ENCODE measurements at regions of chr17 and their contacts with region 1.

Region 1: DNA sequence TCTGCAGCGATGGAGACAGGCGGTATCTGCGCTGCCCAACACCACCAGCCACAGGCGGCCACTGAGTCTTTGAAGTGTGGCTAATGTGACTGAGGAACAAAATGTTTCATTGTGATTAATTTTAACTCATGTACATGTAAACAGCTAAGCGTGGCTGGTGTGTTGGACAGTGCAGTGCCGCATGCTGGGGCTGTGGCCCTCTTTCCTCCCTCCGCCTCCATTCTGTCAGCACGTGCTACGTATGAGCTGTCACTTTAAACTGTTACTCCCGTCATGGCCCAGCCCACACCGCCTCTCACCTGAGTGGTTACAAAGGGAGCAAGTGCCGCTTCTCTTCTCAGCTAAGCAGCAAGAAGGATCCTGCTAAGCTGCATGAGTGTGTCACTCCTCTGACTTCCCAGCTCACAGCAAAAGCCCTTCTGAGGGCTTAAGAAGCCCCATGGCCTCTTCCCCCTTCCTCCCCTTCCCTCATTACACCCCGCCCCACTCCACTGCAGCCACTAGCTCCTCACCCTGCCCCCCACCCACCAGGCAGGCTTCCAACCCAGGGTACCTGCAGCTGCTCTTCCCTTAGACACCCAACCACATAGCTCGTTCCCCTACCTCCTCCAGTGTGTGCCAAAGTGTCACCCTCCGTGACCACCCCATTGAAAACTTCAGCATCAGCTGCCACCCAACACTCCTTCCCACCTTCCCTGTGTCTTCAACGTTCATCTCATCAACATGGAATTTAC is 15.0 kb downstream of the HASPIN start:
- DNase-seq: peak in 8 of 9 donors; percentile 56 to 69 (median 60)
- ATAC-seq: peak; percentile 79
- H3K4me3 ChIP-seq: no peak overlapping the region
- H3K4me3 Mint-ChIP-seq: peak overlapping the region; percentile 2 to 77 (median 68)
- H3K27ac ChIP-seq: no peak overlapping the region
- H3K27ac Mint-ChIP-seq: peak overlapping the region; percentile 61 to 95 (median 73)
- H3K4me1 ChIP-seq: peaks cover 11 to 20% of the 10 kb centered on the region in 2 donors
- H3K4me1 Mint-ChIP-seq: peaks cover 21 to 47% (median 38%) of the 10 kb centered on the region in 7 donors
- H3K27me3 ChIP-seq: no peaks in the 10 kb centered on the region
- H3K27me3 Mint-ChIP-seq: no peaks in the 10 kb centered on the region

Region 2: DNA sequence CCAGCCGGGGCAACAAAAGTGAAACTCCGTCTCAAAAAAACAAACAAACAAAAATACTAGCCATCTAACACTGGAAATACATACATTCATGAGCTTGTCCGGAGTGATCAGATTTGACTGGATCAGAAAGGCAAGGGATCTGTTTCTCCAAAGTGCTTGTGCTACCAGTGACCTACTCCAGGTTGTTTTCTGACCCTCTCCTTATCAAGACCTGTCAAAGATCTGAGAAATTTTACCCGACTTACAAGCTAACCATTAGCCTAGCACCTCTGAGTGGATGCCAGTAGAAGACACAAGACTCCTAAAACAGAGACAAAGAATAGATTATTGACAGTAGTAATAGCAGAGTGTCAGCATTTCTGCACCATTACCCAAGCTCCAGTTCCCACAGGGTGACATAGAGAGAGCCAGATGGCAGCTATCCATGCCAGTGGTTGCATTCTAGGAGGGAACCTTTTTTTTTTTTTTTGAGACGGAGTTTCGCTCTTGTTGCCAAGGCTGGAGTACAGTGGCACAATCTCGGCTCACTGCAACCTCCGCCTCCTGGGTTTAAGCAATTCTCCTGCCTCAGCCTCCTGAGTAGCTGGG is 253.2 kb before region 1 on chr17:
- CTCF ChIA-PET with region 1: no interaction called
- POLR2A ChIA-PET with region 1: no interaction called
- intact Hi-C with region 1: no loop called
- DNase-seq: no peak
- ATAC-seq: no peak
- H3K4me3 ChIP-seq: no peak overlapping the region
- H3K4me3 Mint-ChIP-seq: no peak overlapping the region
- H3K27ac ChIP-seq: no peak overlapping the region
- H3K27ac Mint-ChIP-seq: no peak overlapping the region
- H3K4me1 ChIP-seq: no peaks in the 10 kb centered on the region
- H3K4me1 Mint-ChIP-seq: no peaks in the 10 kb centered on the region
- H3K27me3 ChIP-seq: peaks cover 2 to 3% of the 10 kb centered on the region in 2 donors
- H3K27me3 Mint-ChIP-seq: peaks cover 16 to 44% (median 40%) of the 10 kb centered on the region in 5 donors

Region 3: DNA sequence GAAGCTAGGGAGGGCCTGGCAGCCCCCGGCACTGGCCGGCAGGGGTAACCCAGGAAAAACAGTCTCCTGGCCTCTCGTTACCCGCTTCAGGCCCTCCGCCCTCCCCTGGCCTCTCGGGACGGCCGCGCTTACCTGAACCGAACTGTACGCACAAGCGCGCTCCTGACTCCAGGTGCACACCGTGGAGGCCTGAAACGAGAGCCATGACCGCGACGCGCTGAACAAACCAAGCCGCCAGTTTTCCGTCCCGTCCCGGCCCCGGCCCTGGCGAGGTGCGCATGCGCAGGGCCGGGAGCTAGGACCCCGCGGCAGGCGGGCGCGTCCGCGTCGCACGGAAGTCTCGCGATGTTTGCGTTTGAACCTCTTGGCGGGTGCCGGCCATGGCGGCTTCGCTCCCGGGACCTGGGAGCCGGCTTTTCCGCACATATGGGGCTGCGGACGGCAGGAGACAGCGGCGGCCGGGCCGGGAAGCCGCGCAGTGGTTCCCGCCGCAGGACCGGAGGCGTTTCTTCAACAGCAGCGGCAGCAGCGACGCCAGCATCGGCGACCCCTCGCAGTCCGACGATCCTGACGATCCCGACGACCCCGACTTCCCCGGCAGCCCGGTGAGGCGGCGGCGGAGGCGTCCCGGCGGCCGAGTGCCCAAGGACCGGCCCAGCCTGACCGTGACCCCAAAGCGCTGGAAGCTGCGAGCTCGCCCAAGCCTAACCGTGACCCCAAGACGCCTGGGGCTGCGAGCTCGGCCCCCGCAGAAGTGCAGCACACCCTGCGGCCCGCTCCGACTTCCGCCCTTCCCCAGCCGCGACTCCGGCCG is 15.0 kb before region 1 on chr17 and contains the start of gene HASPIN:
- CTCF ChIA-PET with region 1: interaction called, 8 read pairs
- POLR2A ChIA-PET with region 1: interaction called, 3 read pairs
- intact Hi-C with region 1: loop called in 1 of 2 experiments (anchors 1 kb)
- DNase-seq: peak; percentile 85 to 97 (median 92)
- ATAC-seq: peak; percentile 92
- H3K4me3 ChIP-seq: peak within 1 kb of the TSS; percentile 77
- H3K4me3 Mint-ChIP-seq: peak within 1 kb of the TSS; percentile 84 to 95 (median 92)
- H3K27ac ChIP-seq: peak within 1 kb of the TSS; percentile 83
- H3K27ac Mint-ChIP-seq: peak within 1 kb of the TSS; percentile 65 to 94 (median 86)
- H3K4me1 ChIP-seq: peaks cover 7 to 24% of the 10 kb centered on the region in 2 donors
- H3K4me1 Mint-ChIP-seq: peaks cover 21 to 55% (median 39%) of the 10 kb centered on the region in 7 donors
- H3K27me3 ChIP-seq: no peaks in the 10 kb centered on the region
- H3K27me3 Mint-ChIP-seq: no peaks in the 10 kb centered on the region
- total RNA-seq, gene HASPIN: 0.32 to 18.5 (median 0.35) TPM

Region 4: GRCh38 chr17:3773511-3773910 is 34.8 kb after region 1 on chr17:
- CTCF ChIA-PET with region 1: interaction called, 7 read pairs
- POLR2A ChIA-PET with region 1: no interaction called
- intact Hi-C with region 1: loop called in 1 of 2 experiments (anchors 5 kb)
- DNase-seq: no peak
- ATAC-seq: no peak
- H3K4me3 ChIP-seq: no peak overlapping the region
- H3K4me3 Mint-ChIP-seq: no peak overlapping the region
- H3K27ac ChIP-seq: no peak overlapping the region
- H3K27ac Mint-ChIP-seq: no peak overlapping the region
- H3K4me1 ChIP-seq: peaks cover 8 to 36% of the 10 kb centered on the region in 2 donors
- H3K4me1 Mint-ChIP-seq: peaks cover 10 to 38% (median 25%) of the 10 kb centered on the region in 7 donors
- H3K27me3 ChIP-seq: no peaks in the 10 kb centered on the region
- H3K27me3 Mint-ChIP-seq: peaks cover 0 to 5% (median 0%) of the 10 kb centered on the region in 5 donors

Region 5: DNA sequence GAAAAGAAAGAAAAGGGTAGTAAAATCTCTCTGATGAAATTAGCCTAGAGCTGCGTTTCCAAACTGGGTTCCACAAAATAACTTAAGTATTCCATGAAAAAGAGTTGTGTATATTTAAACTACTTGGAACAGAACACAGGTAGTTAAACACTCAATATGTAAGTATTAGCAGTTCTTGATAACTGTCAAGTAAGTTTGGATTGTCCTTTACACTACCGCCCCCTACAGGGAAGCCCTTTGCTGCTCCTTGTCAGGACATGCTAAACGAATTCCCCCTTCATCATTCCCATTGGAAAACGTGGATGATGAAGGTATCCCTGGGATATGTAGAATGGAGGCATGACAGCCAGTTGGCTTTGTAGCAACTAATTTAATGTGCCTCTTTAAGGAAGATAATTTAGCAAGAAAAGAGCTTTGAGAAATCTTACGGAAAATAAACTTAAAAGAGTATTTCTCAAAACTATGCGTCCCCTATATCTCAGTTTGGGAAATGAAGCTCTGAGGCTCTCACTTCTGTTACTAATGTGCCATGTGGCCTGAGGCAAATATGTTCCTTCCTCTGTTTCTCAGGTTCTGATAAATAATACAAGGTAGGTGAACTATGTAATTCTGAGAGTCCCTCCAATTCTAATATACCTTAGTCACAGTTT is 88.5 kb after region 1 on chr17:
- CTCF ChIA-PET with region 1: interaction called, 154 read pairs
- POLR2A ChIA-PET with region 1: interaction called, 15 read pairs
- intact Hi-C with region 1: loop called (anchors 1 kb)
- DNase-seq: peak; percentile 22 to 75 (median 71)
- ATAC-seq: peak; percentile 74
- H3K4me3 ChIP-seq: no peak overlapping the region
- H3K4me3 Mint-ChIP-seq: no peak overlapping the region
- H3K27ac ChIP-seq: no peak overlapping the region
- H3K27ac Mint-ChIP-seq: peak overlapping the region in 2 of 9 donors; percentile 42 to 59
- H3K4me1 ChIP-seq: no peaks in the 10 kb centered on the region
- H3K4me1 Mint-ChIP-seq: peaks cover 0 to 15% (median 4%) of the 10 kb centered on the region in 7 donors
- H3K27me3 ChIP-seq: no peaks in the 10 kb centered on the region
- H3K27me3 Mint-ChIP-seq: no peaks in the 10 kb centered on the region

Region 6: GRCh38 chr17:3913531-3914311 is 175.0 kb after region 1 on chr17:
- CTCF ChIA-PET with region 1: interaction called, 3 read pairs
- POLR2A ChIA-PET with region 1: no interaction called
- intact Hi-C with region 1: loop called in 1 of 2 experiments (anchors 2 kb)
- DNase-seq: peak; percentile 65 to 85 (median 76)
- ATAC-seq: peak; percentile 78
- H3K4me3 ChIP-seq: no peak overlapping the region
- H3K4me3 Mint-ChIP-seq: peak overlapping the region in 2 of 10 donors; percentile 23 to 77
- H3K27ac ChIP-seq: no peak overlapping the region
- H3K27ac Mint-ChIP-seq: peak overlapping the region; percentile 31 to 86 (median 76)
- H3K4me1 ChIP-seq: peaks cover 27 to 38% of the 10 kb centered on the region in 2 donors
- H3K4me1 Mint-ChIP-seq: peaks cover 26 to 64% (median 47%) of the 10 kb centered on the region in 7 donors
- H3K27me3 ChIP-seq: no peaks in the 10 kb centered on the region
- H3K27me3 Mint-ChIP-seq: no peaks in the 10 kb centered on the region

Region 7: DNA sequence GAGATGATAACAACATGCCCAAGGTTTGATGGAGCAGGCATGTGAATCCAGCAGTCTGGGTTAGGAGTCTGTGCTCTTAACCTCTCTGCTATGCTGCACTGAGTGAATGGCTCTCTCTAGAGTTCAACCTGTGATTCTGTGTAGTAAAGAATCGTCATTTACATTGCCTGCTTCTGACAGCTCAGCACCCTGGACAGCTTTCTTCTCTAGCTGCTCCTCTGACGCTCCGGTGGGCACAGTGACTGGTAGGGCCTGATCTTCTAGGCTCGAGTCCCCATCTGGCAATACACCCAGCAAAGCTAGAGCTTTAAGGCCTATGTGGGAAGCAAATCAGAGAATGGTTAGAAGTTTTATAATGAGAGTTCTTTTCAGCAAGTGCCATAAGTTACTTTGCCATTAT is 310.8 kb after region 1 on chr17:
- CTCF ChIA-PET with region 1: no interaction called
- POLR2A ChIA-PET with region 1: no interaction called
- intact Hi-C with region 1: no loop called
- DNase-seq: no peak
- ATAC-seq: no peak
- H3K4me3 ChIP-seq: no peak overlapping the region
- H3K4me3 Mint-ChIP-seq: no peak overlapping the region
- H3K27ac ChIP-seq: no peak overlapping the region
- H3K27ac Mint-ChIP-seq: no peak overlapping the region
- H3K4me1 ChIP-seq: peaks cover 0 to 25% of the 10 kb centered on the region in 2 donors
- H3K4me1 Mint-ChIP-seq: peaks cover 6 to 21% (median 16%) of the 10 kb centered on the region in 7 donors
- H3K27me3 ChIP-seq: no peaks in the 10 kb centered on the region
- H3K27me3 Mint-ChIP-seq: no peaks in the 10 kb centered on the region